ENCODE measurements at regions of chr15 and their contacts with region 1.

Region 1: DNA sequence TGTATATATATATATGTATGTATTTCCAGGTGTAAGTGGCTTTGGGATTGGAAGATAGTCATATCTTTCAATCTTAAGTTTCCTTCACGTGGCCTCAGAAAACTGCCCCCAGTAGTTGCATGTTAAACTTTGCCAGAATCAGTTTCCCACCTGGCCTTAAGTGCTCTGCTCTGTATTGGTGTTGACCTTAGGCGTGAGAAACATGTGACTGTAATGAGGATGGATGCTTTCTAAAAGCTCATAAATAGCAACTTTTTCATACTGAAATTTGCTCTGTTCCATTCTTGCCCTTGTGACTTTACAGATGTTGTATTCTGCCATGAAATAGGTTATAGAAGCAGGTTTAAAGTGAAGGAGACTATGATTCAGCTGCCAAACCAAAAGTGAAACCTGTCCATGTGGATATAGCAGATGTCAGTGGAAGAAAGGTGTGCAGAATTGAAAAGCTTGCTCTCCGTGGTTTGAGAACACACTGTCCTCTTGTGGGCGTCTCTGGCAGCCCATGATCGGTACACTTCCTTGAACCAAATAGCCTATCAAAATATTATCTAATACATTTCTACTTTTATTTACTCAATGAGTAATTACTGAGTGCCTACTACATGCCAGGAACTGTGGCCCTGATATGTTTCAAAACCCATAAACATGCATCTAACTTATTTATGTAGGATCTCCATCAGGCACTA is 15.8 kb downstream of the SCG5 start:
- DNase-seq: no peak
- H3K4me3 ChIP-seq: no peak overlapping the region
- H3K27ac ChIP-seq: no peak overlapping the region
- H3K4me1 ChIP-seq: peaks cover 7% of the 10 kb centered on the region
- H3K27me3 ChIP-seq: no peaks in the 10 kb centered on the region
- CTCF ChIP-seq: no peak
- POLR2A ChIP-seq: no peak

Region 2: DNA sequence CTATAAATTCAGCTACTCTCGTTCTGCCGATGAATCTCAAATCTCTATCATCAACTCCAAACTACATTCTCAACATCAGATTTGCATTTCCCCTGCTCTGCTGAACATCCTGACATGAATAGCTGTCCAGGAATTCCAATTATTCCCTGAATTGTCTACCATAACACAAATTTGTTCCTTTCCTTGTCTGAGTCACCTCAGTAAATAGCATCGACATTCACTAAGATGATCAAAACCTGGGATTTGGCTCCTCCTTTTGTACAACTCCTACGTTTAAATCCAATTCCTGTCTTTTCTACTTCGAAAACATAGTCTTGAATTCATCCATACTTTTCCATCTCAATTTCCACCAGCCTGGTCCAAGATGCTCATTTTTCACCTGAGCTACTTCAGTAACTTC is 167.4 kb after region 1 on chr15:
- CTCF ChIA-PET with region 1: no interaction called
- POLR2A ChIA-PET with region 1: no interaction called
- dilution Hi-C with region 1: no loop called
- intact Hi-C with region 1: loop called (anchors 1 kb)
- DNase-seq: peak; percentile 61
- H3K4me3 ChIP-seq: no peak overlapping the region
- H3K27ac ChIP-seq: peak overlapping the region; percentile 88
- H3K4me1 ChIP-seq: peaks cover 30% of the 10 kb centered on the region
- H3K27me3 ChIP-seq: no peaks in the 10 kb centered on the region
- CTCF ChIP-seq: no peak
- POLR2A ChIP-seq: no peak

Region 3: GRCh38 chr15:32855942-32856341 is 198.6 kb after region 1 on chr15:
- CTCF ChIA-PET with region 1: interaction called, 5 read pairs
- POLR2A ChIA-PET with region 1: no interaction called
- dilution Hi-C with region 1: no loop called
- intact Hi-C with region 1: loop called (anchors 5 kb)
- DNase-seq: peak; percentile 94
- H3K4me3 ChIP-seq: no peak overlapping the region
- H3K27ac ChIP-seq: peak overlapping the region; percentile 85
- H3K4me1 ChIP-seq: peaks cover 34% of the 10 kb centered on the region
- H3K27me3 ChIP-seq: no peaks in the 10 kb centered on the region
- CTCF ChIP-seq: no peak
- POLR2A ChIP-seq: peak; percentile 28

Region 4: GRCh38 chr15:32994810-32995424 is 337.6 kb after region 1 on chr15:
- CTCF ChIA-PET with region 1: interaction called, 226 read pairs
- POLR2A ChIA-PET with region 1: no interaction called
- dilution Hi-C with region 1: no loop called
- intact Hi-C with region 1: loop called (anchors 1 kb)
- DNase-seq: peak; percentile 63
- H3K4me3 ChIP-seq: no peak overlapping the region
- H3K27ac ChIP-seq: no peak overlapping the region
- H3K4me1 ChIP-seq: no peaks in the 10 kb centered on the region
- H3K27me3 ChIP-seq: no peaks in the 10 kb centered on the region
- CTCF ChIP-seq: peak; percentile 19 to 25
- POLR2A ChIP-seq: no peak

Region 5: GRCh38 chr15:33132722-33133345 is 475.5 kb after region 1 on chr15:
- CTCF ChIA-PET with region 1: interaction called, 25 read pairs
- POLR2A ChIA-PET with region 1: no interaction called
- dilution Hi-C with region 1: no loop called
- intact Hi-C with region 1: loop called (anchors 1 kb)
- DNase-seq: peak; percentile 68
- H3K4me3 ChIP-seq: no peak overlapping the region
- H3K27ac ChIP-seq: no peak overlapping the region
- H3K4me1 ChIP-seq: peaks cover 10% of the 10 kb centered on the region
- H3K27me3 ChIP-seq: peaks cover 5% of the 10 kb centered on the region in 2 experiments
- CTCF ChIP-seq: peak; percentile 68 to 78
- POLR2A ChIP-seq: no peak

Measured in endothelial cell of umbilical vein (primary cell).